Caco-2 (cell line): ENCODE measurements at regions of chr17 and their contacts with region 1.

Region 1: DNA sequence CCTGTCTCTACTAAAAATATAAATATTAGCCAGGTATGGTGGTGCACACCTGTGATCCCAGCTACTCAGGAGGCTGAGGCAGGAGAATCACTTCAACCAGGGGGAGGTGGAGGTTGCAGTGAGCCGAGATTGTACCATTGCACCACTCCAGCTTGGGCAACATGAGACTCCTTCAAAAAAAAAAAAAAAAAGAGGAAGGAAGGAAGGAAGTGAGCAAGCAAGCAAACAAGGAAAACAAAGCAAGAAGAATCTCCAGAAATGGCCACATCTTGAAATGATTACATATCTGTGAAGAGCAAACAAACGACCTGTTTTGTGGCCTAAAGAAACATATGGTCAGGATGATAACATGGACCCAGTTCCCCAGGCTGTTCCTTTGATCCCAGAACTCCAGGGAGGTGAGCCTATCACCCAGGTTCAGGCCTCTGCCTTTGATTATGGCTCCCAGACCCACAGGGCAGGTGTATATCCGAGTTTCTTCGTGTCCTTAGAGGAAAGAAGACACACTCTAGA is 8.9 kb downstream of the ACOX1 start:
- DNase-seq: peak; percentile 70 to 71
- H3K4me3 ChIP-seq: no peak overlapping the region
- H3K4me3 Mint-ChIP-seq: no peak overlapping the region
- H3K27ac Mint-ChIP-seq: peak overlapping the region; percentile 26
- H3K4me1 ChIP-seq: peaks cover 11% of the 10 kb centered on the region
- H3K4me1 Mint-ChIP-seq: peaks cover 12% of the 10 kb centered on the region
- H3K27me3 ChIP-seq: no peaks in the 10 kb centered on the region
- H3K27me3 Mint-ChIP-seq: no peaks in the 10 kb centered on the region
- CTCF ChIP-seq: no peak

Region 2: GRCh38 chr17:76000016-76000754 is 30.1 kb after region 1 on chr17:
- CTCF ChIA-PET with region 1: interaction called, 3 read pairs
- POLR2A ChIA-PET with region 1: interaction called, 12 read pairs
- intact Hi-C with region 1: no loop called
- DNase-seq: peak; percentile 65 to 81
- H3K4me3 ChIP-seq: no peak overlapping the region
- H3K4me3 Mint-ChIP-seq: no peak overlapping the region
- H3K27ac Mint-ChIP-seq: no peak overlapping the region
- H3K4me1 ChIP-seq: peaks cover 54% of the 10 kb centered on the region
- H3K4me1 Mint-ChIP-seq: peaks cover 25% of the 10 kb centered on the region
- H3K27me3 ChIP-seq: no peaks in the 10 kb centered on the region
- H3K27me3 Mint-ChIP-seq: no peaks in the 10 kb centered on the region
- CTCF ChIP-seq: peak; percentile 86 to 95